Aorta (tissue), 5 donors: ENCODE measurements at regions of chr7 and their contacts with region 1.

Region 1: DNA sequence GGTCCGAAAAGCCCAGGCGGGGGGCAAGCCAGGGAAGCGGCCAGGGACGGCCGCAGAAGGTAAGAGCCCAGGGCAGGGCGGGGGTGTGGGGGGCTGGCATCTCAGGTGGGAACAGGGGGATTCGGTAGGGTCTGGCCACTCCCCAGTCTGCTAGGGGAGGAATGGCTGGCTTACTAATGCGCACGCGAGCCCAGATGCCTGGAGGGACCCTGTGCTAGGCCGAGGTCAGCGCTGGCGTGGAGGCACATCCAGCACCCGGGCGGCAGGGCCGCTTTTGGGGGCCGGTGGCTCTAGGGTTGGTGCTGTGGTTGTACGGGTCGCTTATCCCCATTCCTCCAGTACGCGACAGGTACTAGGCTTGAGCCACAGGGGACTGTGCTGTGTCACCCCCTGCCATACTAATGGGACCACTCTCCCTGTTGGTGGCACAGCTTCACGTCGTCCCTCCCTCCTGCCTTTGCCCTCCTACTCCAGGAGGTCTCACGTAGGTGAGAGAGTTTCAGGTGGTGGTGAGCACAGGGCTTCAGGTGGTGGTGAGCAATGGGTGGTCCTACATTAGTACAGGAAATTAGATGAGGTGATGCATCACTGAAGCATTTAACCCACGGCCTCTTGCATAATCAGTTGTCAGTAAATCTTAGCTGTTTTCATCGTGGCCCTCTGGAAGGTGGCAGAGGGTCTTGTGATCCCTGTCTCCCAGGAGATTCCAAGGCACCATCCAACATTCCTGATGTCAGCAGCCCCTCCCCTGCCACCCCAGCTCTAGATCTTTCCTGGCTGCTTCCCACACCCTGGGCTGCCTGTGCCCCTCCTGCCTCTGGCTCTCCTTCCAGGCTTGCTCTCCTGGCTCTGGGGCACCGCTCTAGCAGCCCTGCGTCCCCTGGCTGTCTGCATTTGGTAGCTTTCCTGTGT is 971 bp downstream of the AEBP1 start:
- DNase-seq: peak; percentile 76 to 87
- ATAC-seq: peak; percentile 46
- H3K4me3 ChIP-seq: peak overlapping the region; percentile 47 to 80
- H3K27ac ChIP-seq: peak overlapping the region; percentile 89 to 97
- H3K4me1 ChIP-seq: peaks cover 0 to 9% of the 10 kb centered on the region in 2 donors
- H3K27me3 ChIP-seq: no peaks in the 10 kb centered on the region

Region 2: DNA sequence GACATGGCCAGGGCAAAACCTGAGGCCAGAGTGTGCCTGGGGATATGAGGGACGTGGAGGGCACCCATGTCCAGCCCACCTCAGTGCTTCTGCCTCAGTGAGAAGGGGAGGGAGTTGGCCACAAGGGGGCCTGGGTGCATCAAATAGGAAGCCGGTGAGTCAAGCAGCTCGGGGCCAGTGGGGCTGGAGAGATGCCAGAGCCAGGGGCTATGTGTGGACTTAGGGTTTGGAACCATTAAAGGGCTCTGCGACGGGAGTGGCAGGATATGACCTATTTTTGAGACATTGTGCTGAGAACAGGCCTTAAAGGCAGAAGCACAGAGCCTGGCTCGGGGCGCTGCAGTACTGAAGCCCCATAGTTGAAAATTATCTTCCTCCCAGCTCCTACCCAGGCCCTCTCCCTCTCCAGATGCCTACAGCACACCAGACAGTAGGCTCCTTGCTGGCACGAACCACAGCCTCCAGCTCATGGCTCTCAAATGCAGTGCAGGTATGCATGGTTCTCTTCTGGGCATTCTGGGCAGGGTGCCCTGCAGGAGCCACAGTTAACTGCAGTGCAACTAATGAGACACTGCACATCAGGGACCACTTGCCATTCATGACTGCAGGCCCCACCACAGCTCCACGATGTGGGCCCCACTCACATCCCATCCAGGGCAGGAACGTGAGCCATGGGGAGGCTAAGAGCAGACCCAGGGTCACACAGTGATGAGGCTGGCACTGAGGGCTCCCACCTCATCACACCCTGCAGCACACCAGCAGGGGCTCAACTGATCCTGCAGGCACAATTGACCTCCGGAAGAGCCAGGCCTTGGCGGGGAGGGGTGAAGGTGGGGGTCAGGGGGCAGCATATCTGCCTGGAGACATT is 32.5 kb before region 1 on chr7:
- intact Hi-C with region 1: loop called in 1 of 2 experiments (anchors 5 kb)
- DNase-seq: peak; percentile 93 to 96
- ATAC-seq: peak; percentile 77
- H3K4me3 ChIP-seq: no peak overlapping the region
- H3K27ac ChIP-seq: peak overlapping the region in 1 of 2 donors; percentile 49
- H3K4me1 ChIP-seq: no peaks in the 10 kb centered on the region
- H3K27me3 ChIP-seq: no peaks in the 10 kb centered on the region

Region 3: DNA sequence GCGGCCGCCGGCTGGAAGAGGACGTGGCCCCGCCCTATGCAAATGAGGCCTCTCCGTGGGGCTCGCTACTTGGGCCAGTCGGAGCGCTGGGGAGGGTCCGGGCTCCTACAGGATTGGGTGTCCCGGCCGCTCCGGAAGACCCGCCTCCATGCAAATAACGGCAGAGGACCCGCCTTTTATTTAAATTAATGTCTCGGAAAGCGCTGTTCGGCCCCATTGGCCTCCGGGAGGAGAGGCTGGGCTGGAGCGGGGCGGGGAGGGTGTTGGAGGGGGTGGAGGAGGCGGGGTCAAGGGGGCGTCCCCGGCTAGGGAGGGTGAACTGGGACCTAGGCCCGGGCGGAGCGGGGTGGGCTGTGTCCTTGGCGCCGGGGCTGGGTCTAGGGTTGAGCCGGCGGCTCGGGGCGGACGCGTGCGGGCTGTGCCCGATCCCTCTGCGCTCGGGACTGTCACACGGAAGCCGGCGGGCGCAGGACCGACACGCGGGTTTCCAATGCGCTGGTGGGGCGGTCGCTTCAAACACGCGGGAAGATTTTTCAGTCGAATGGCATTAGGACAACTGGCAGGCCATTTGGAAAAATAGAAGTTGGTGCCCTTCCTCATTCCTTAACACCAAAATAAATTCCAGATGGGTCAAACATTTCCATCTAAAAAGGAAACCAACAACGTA is 22.4 kb before region 1 on chr7:
- intact Hi-C with region 1: loop called in 1 of 2 experiments (anchors 2 kb)
- DNase-seq: peak; percentile 99 to 100
- ATAC-seq: peak; percentile 96
- H3K4me3 ChIP-seq: peak overlapping the region in 1 of 2 donors; percentile 27
- H3K27ac ChIP-seq: peak overlapping the region; percentile 55 to 57
- H3K4me1 ChIP-seq: peaks cover 0 to 8% of the 10 kb centered on the region in 2 donors
- H3K27me3 ChIP-seq: no peaks in the 10 kb centered on the region

Region 4: GRCh38 chr7:44087911-44088838 is 16.9 kb before region 1 on chr7:
- intact Hi-C with region 1: loop called in 1 of 2 experiments (anchors 1 kb)
- DNase-seq: peak; percentile 94 to 95
- ATAC-seq: peak; percentile 89
- H3K4me3 ChIP-seq: no peak overlapping the region
- H3K27ac ChIP-seq: peak overlapping the region; percentile 87 to 97
- H3K4me1 ChIP-seq: peaks cover 0 to 8% of the 10 kb centered on the region in 2 donors
- H3K27me3 ChIP-seq: no peaks in the 10 kb centered on the region